AG04449 (cell line): ENCODE measurements at regions of chr9 and their contacts with region 1.

Region 1: GRCh38 chr9:4604678-4605095 is 57.4 kb upstream of the PLPP6 start:
- DNase-seq: no peak
- H3K4me3 ChIP-seq: no peak overlapping the region
- CTCF ChIP-seq: peak; percentile 48

Region 2: DNA sequence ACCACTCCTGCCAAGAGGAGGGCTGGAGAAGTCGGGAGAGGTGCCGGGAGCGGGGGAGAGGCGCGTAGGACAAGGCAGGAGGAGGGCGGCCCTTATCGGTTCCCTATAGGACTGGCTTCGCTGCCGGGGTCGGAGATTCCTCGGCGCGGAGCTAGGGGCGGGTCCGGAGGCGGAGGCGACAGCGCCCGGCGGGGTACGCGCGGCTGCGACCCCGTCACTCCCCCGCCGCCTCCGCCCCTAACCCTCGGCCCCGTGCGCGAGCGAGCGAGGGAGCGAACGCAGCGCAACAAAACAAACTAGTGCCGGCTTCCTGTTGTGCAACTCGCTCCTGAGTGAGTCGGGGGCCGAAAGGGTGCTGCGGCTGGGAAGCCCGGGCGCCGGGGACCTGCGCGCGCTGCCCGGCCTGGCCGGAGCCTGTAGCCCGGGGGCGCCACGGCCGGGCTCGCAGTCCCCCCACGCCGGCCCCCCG is 306.9 kb before region 1 on chr9:
- CTCF ChIA-PET with region 1: no interaction called
- POLR2A ChIA-PET with region 1: no interaction called
- DNase-seq: no peak
- H3K4me3 ChIP-seq: peak overlapping the region; percentile 84
- CTCF ChIP-seq: no peak

Region 3: GRCh38 chr9:4344946-4345345 is 259.7 kb before region 1 on chr9:
- CTCF ChIA-PET with region 1: no interaction called
- POLR2A ChIA-PET with region 1: no interaction called
- DNase-seq: no peak
- H3K4me3 ChIP-seq: no peak overlapping the region
- CTCF ChIP-seq: no peak

Region 4: DNA sequence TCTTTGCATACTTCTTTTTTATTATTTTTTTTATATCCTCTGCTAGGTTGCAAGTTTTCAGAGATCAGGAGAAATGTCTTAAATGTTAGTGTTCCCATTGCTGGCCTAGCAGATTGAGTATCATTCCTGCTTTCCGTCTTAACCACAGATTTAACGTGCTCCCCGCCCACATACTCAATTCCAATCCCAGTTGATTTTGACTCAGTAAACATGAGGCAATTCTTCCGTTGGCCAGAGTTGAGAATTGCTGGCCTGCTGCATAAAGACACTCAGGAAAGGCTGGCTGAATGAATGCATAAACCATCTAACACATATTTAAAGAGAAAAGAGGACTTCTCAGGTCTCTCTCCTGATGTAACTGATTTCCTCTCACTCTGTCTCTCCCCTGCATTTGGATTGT is 10.6 kb after region 1 on chr9:
- CTCF ChIA-PET with region 1: interaction called, 26 read pairs
- POLR2A ChIA-PET with region 1: no interaction called
- DNase-seq: peak; percentile 38
- H3K4me3 ChIP-seq: no peak overlapping the region
- CTCF ChIP-seq: no peak

Region 5: DNA sequence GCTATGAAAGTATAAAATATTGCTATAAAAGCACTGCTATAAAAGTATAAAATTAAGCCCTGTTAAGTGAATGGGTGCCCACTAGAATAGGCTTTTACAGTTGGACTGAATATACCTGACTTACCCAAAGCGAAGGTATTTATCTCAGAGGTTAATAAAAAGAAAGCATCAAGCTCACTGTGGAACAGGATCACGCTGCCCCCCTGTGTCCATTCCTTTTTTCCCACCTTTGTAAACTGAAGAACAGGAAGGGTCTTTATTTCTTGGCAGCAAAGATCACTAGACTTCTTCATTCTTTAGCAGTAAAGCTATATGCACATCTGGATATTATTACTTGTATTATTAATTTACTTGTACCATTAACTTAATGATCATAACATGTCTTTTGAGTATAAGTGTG is 35.3 kb after region 1 on chr9:
- CTCF ChIA-PET with region 1: interaction called, 16 read pairs
- POLR2A ChIA-PET with region 1: no interaction called
- DNase-seq: no peak
- H3K4me3 ChIP-seq: no peak overlapping the region
- CTCF ChIP-seq: peak; percentile 53

Region 6: DNA sequence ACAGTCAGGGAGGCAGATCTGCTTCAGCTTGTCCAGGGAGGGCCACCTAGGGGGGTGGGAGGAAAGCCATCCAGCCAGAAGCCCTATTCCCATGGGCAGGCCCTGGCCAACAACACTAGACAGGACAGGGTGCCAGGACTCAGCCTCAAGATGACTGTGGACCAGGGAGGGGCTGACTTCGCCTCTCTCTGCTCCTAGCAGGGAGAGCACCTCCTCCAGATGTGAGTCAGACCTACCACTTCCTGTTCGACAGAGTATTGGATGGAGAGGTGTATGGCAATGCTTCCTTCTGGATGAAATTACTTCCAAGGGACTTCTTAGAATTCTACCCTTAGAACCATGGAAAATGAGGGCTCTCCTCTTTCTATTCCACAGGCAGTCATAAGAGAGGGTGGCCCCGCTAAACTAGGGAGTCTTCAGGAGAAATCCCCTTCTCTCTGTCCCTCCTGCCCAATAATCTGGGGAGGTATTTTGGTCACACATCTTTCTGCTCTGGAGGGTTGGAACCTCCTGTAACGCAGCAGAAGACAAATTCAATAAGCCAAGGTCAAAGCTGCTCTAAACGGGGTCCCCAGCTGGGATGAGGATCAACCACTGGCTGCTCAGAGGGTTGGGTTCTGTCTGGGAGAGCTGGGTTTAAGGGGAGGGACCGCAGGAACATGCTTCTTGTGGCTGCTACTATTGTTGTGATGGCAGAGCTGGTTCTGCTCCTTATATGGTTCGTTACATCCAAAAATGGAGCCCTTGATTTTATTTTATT is 164.8 kb after region 1 on chr9:
- CTCF ChIA-PET with region 1: no interaction called
- POLR2A ChIA-PET with region 1: no interaction called
- DNase-seq: no peak
- H3K4me3 ChIP-seq: no peak overlapping the region
- CTCF ChIP-seq: no peak